ENCODE measurements at regions of chr1 and their contacts with region 1.

Region 1: GRCh38 chr1:47710329-47711071 is 272.7 kb downstream of the FOXD2 start:
- DNase-seq: peak in 4 of 5 donors; percentile 54 to 67 (median 54)
- H3K4me3 ChIP-seq: no peak overlapping the region
- H3K4me3 Mint-ChIP-seq: peak overlapping the region in 7 of 8 donors; percentile 35 to 65 (median 57)
- H3K27ac ChIP-seq: no peak overlapping the region
- H3K27ac Mint-ChIP-seq: peak overlapping the region in 1 of 7 donors; percentile 18
- H3K4me1 ChIP-seq: peaks cover 20% of the 10 kb centered on the region
- H3K4me1 Mint-ChIP-seq: peaks cover 0 to 17% (median 8%) of the 10 kb centered on the region in 4 donors
- H3K27me3 ChIP-seq: peaks cover 31% of the 10 kb centered on the region
- H3K27me3 Mint-ChIP-seq: peaks cover 40 to 47% of the 10 kb centered on the region in 2 donors

Region 2: DNA sequence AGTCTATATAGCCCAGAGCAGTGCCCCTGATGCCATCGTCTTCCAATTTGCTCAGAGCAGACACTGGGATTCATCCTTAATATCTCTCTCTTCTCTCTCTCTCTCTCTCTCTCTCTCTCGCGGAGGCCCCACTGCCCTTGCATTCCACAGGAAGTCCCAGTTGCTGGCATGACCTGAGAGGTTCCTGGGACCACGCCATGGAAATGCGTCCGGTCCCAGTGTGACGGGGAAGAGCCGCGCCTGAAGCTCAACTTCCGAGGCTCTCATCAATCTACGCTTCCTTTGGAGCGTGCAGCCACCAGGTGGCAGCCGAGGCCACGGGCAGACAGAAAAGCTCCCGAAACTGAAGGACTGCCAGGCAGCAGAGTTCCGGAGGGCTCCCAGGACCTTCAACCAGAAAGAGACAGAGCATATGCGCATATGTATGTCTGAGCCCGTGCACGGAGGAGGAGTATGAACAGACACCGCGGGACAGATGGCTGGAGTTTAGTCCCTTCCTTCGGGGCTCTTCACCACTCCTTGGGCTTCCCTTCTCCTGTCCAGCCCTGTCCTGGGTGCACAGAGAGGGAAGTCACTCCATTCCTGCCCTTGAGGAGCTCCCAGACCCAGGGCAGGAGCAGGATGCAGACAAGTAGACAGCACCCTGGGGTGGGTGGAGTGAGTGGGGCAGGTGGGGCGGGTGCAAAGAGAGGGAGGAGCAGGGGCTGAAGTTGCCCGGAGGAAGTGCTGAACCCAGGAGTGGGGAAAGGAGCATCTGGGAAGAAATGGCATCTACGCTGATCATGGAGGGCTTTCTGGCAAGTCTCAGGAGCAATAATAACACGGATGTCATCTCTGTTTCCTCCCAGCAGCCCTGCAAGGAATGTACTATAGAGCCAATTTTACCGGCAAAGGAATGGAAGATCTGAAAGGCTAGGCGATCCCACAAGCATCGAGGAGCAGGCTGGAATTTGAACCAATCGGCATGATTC is 531.2 kb before region 1 on chr1:
- CTCF ChIA-PET with region 1: interaction called, 8 read pairs
- POLR2A ChIA-PET with region 1: no interaction called
- intact Hi-C with region 1: loop called (anchors 5 kb)
- DNase-seq: peak; percentile 45 to 60 (median 58)
- H3K4me3 ChIP-seq: peak overlapping the region; percentile 34 to 53
- H3K4me3 Mint-ChIP-seq: peak overlapping the region; percentile 76 to 88 (median 86)
- H3K27ac ChIP-seq: no peak overlapping the region
- H3K27ac Mint-ChIP-seq: peak overlapping the region in 3 of 7 donors; percentile 32 to 75 (median 66)
- H3K4me1 ChIP-seq: peaks cover 7% of the 10 kb centered on the region
- H3K4me1 Mint-ChIP-seq: peaks cover 9 to 17% (median 13%) of the 10 kb centered on the region in 4 donors
- H3K27me3 ChIP-seq: peaks cover 10% of the 10 kb centered on the region
- H3K27me3 Mint-ChIP-seq: peaks cover 15 to 40% of the 10 kb centered on the region in 2 donors

Region 3: GRCh38 chr1:47388891-47389238 is 321.6 kb before region 1 on chr1:
- CTCF ChIA-PET with region 1: interaction called, 12 read pairs
- POLR2A ChIA-PET with region 1: no interaction called
- intact Hi-C with region 1: loop called (anchors 1 kb)
- DNase-seq: peak in 3 of 5 donors; percentile 13 to 20 (median 16)
- H3K4me3 ChIP-seq: no peak overlapping the region
- H3K4me3 Mint-ChIP-seq: no peak overlapping the region
- H3K27ac ChIP-seq: no peak overlapping the region
- H3K27ac Mint-ChIP-seq: peak overlapping the region in 2 of 7 donors; percentile 46 to 47
- H3K4me1 ChIP-seq: no peaks in the 10 kb centered on the region
- H3K4me1 Mint-ChIP-seq: peaks cover 0 to 2% (median under 1%) of the 10 kb centered on the region in 4 donors
- H3K27me3 ChIP-seq: no peaks in the 10 kb centered on the region
- H3K27me3 Mint-ChIP-seq: peaks cover 2 to 10% of the 10 kb centered on the region in 2 donors

Region 4: DNA sequence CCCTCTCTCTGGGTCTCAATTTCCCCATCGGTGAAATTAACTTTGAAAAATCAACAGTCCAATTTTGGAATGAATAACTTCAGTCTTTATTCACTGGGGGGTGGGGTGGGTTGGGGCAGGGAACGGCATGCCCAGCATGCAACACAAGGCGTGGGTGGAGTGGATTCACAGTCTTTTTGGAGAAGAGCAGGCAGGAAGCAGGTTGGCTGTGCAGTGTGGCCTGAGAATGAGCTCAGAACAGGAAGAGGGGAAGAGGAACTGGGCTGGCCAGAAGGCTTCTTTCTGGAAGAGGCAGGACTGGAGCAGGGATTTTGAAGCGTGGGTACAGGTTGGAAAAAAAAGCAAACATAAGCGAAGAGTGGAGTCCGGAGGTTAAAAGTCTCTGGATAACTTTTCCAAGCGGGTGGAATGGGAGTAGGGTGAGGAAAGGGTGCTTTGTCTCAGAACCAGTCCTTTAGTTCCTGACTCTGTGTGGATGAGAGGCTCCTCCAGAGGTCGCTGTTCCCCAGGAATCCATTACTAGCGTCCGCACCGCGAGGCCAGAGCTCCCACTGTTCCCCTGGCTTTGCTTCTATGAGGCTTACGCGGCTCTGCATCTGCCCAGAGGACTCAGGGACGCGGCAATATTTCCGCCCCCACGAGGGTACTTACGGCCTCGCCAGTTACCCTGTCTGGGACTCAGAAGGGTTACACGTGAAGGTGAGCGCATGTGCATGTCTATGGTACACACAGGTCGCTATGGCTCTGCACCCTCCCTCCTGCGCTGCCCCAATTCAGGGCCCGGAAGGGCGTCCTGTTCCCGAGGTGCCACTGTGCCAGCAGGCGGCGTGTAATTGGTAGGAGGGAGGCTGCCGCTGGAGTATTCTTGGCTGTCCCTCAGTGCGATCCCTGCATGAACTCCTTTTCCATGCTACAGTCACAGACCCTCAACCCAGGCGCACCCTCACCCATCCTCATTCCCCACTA is 278.1 kb before region 1 on chr1:
- CTCF ChIA-PET with region 1: interaction called, 138 read pairs
- POLR2A ChIA-PET with region 1: interaction called, 4 read pairs
- intact Hi-C with region 1: loop called (anchors 1 kb)
- DNase-seq: peak; percentile 56 to 72 (median 62)
- H3K4me3 ChIP-seq: peak overlapping the region in 1 of 2 donors; percentile 21
- H3K4me3 Mint-ChIP-seq: peak overlapping the region in 7 of 8 donors; percentile 44 to 81 (median 67)
- H3K27ac ChIP-seq: no peak overlapping the region
- H3K27ac Mint-ChIP-seq: peak overlapping the region in 4 of 7 donors; percentile 29 to 57 (median 40)
- H3K4me1 ChIP-seq: peaks cover 31% of the 10 kb centered on the region
- H3K4me1 Mint-ChIP-seq: peaks cover 17 to 50% (median 32%) of the 10 kb centered on the region in 4 donors
- H3K27me3 ChIP-seq: no peaks in the 10 kb centered on the region
- H3K27me3 Mint-ChIP-seq: no peaks in the 10 kb centered on the region

Region 5: DNA sequence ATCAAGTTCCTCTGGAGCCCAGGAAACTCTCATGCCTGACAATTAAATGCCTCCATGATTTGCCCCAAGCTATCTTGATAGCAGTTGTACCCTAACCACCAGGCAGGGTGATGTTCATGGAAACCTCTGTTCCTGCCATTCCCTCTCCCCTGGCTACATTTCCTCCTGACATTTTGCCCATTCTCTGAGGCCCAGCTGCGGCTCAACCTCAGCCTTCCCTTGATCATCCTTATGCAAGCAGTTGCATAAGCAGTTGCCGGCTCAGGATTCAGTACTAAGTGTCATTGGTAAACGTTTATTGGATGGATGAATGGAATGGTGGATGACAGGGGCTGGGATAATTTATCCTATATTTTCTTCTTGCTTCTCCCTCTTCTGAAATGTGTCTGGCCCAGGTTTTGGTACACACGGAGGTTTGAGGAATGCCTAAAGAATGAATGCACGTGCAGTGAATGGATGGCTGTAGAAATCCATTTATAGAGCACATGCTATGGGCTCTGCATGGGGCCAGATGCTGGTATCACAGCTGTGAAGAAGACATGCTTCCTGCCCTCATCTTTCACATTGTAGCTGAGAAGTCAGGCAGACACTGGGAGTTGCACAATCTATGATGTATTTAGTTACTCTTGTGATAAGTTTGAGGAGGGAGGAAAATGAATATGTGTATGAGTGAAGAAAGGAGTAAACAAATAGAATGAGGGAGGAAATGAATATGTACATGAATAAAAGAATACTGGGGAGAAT is 10.8 kb before region 1 on chr1:
- CTCF ChIA-PET with region 1: interaction called, 10 read pairs
- POLR2A ChIA-PET with region 1: no interaction called
- intact Hi-C with region 1: no loop called
- DNase-seq: no peak
- H3K4me3 ChIP-seq: no peak overlapping the region
- H3K4me3 Mint-ChIP-seq: no peak overlapping the region
- H3K27ac ChIP-seq: no peak overlapping the region
- H3K27ac Mint-ChIP-seq: no peak overlapping the region
- H3K4me1 ChIP-seq: no peaks in the 10 kb centered on the region
- H3K4me1 Mint-ChIP-seq: no peaks in the 10 kb centered on the region
- H3K27me3 ChIP-seq: no peaks in the 10 kb centered on the region
- H3K27me3 Mint-ChIP-seq: peaks cover 1 to 10% of the 10 kb centered on the region in 2 donors

Region 6: GRCh38 chr1:48061162-48062136 is 350.9 kb after region 1 on chr1:
- CTCF ChIA-PET with region 1: no interaction called
- POLR2A ChIA-PET with region 1: no interaction called
- intact Hi-C with region 1: no loop called
- DNase-seq: no peak
- H3K4me3 ChIP-seq: no peak overlapping the region
- H3K4me3 Mint-ChIP-seq: no peak overlapping the region
- H3K27ac ChIP-seq: no peak overlapping the region
- H3K27ac Mint-ChIP-seq: no peak overlapping the region
- H3K4me1 ChIP-seq: no peaks in the 10 kb centered on the region
- H3K4me1 Mint-ChIP-seq: no peaks in the 10 kb centered on the region
- H3K27me3 ChIP-seq: no peaks in the 10 kb centered on the region
- H3K27me3 Mint-ChIP-seq: no peaks in the 10 kb centered on the region

Measured in CD4-positive, alpha-beta memory T cell (primary cell).